ENCODE measurements at regions of chr10 and their contacts with region 1.

Region 1: GRCh38 chr10:62760401-62760800 is 44.1 kb upstream of the ADO start:
- DNase-seq: no peak
- ATAC-seq: no peak
- H3K4me3 ChIP-seq: no peak overlapping the region
- H3K27ac ChIP-seq: peak overlapping the region in 3 of 4 donors; percentile 31 to 66 (median 47)
- H3K4me1 ChIP-seq: peaks cover 4 to 27% of the 10 kb centered on the region in 2 donors
- H3K27me3 ChIP-seq: no peaks in the 10 kb centered on the region
- CTCF ChIP-seq: no peak
- POLR2A ChIP-seq: no peak

Region 2: GRCh38 chr10:62804356-62805230 is 44.2 kb after region 1 on chr10 and contains the start of gene ADO:
- in situ Hi-C with region 1: no loop called
- intact Hi-C with region 1: loop called (anchors 5 kb)
- DNase-seq: peak; percentile 75 to 88
- ATAC-seq: peak; percentile 93
- H3K4me3 ChIP-seq: peak within 1 kb of the TSS; percentile 69 to 86 (median 78)
- H3K27ac ChIP-seq: peak within 1 kb of the TSS; percentile 86 to 98 (median 95)
- H3K4me1 ChIP-seq: peaks cover 31 to 39% of the 10 kb centered on the region in 2 donors
- H3K27me3 ChIP-seq: peaks cover 0 to 3% (median 0%) of the 10 kb centered on the region in 3 donors
- CTCF ChIP-seq: no peak
- POLR2A ChIP-seq: peak; percentile 72 to 82
- total RNA-seq, gene ADO: 11.6 to 31.6 (median 27.1) TPM

Region 3: DNA sequence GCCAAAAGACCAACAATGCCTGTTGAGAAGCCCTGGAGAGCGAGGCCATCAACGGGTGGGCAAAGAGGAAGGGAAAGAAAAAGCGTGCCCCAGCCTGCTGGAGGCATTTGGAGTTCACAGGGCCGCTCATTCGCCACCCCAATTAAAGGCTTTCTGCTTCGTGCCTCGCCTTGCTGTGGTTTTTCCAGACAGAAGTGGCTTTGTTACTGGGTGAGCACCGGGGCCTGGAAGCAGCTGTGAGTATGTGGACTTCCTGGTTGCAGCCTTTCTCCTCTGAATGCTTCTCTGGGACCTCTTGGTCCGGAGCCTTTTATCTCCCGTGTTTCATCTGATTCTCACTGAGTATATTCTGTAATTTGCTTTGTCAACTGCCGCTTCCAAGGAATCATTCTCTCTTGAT is 173.9 kb after region 1 on chr10:
- in situ Hi-C with region 1: no loop called
- intact Hi-C with region 1: no loop called
- DNase-seq: no peak
- ATAC-seq: no peak
- H3K4me3 ChIP-seq: no peak overlapping the region
- H3K27ac ChIP-seq: no peak overlapping the region
- H3K4me1 ChIP-seq: no peaks in the 10 kb centered on the region
- H3K27me3 ChIP-seq: no peaks in the 10 kb centered on the region
- CTCF ChIP-seq: no peak
- POLR2A ChIP-seq: no peak

Measured in gastrocnemius medialis (tissue), 4 donors.